Dorsolateral prefrontal cortex (tissue), 120 donors: ENCODE measurements at regions of chr6 and their contacts with region 1.

Region 1: GRCh38 chr6:21593412-21593926 is at the start of gene SOX4:
- DNase-seq: peak; percentile 67 to 95 (median 90)
- H3K4me3 ChIP-seq: peak within 1 kb of the TSS; percentile 60 to 88 (median 75)
- H3K27ac ChIP-seq: peak within 1 kb of the TSS in 58 of 59 donors; percentile 11 to 90 (median 79)
- H3K27me3 ChIP-seq: no peaks in the 10 kb centered on the region
- CTCF ChIP-seq: peak in 3 of 56 donors; percentile 13 to 21 (median 18)
- total RNA-seq, gene SOX4: 1.8 to 6.0 (median 3.8) TPM

Region 2: DNA sequence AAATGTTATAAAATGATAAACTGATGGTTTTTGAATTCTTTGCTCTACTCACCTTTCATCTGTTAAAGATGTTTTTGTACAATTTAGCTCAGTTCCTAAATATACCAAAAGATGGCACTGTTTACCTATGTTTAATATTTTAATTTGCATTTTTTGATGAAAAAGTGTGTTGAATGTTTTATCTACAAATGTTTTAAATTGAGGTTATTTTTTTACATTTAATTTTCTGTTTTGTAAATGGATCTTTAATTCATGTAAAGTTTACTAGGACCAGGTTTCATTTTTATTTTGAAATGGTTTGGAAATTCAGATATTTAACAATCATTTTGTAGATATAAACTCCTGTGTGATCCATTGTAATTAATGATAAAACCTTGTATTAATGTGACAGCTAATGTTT is 1029.2 kb before region 1 on chr6:
- intact Hi-C with region 1: loop called (anchors 2 to 5 kb)
- DNase-seq: no peak
- H3K4me3 ChIP-seq: no peak overlapping the region
- H3K27ac ChIP-seq: no peak overlapping the region
- H3K27me3 ChIP-seq: no peaks in the 10 kb centered on the region
- CTCF ChIP-seq: peak; percentile 52 to 93 (median 75)

Region 3: GRCh38 chr6:20805021-20805420 is 788.4 kb before region 1 on chr6:
- intact Hi-C with region 1: loop called in 1 of 2 experiments (anchors 10 kb)
- DNase-seq: no peak
- H3K4me3 ChIP-seq: no peak overlapping the region
- H3K27ac ChIP-seq: no peak overlapping the region
- H3K27me3 ChIP-seq: no peaks in the 10 kb centered on the region
- CTCF ChIP-seq: no peak

Region 4: DNA sequence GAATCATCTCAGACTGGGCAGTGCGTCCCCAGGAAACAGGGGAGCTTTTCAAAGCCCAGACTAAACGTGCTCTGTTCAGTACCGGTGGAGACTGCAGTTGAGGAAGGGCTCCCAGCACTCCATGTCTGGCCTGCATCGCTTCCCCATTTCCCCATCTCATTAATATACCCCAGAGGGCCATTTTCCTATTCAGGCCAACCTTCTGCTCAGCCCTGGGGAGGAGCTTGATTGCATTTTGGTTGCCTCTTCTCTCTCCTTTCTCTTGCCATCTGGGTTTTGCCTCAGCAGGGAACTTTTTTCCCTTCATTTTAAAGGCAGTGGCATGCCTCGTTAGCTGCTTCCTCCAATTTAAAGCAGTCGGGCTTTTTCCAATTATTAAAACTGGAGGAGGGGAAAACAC is 394.2 kb before region 1 on chr6:
- intact Hi-C with region 1: loop called in 1 of 2 experiments (anchors 5 kb)
- DNase-seq: no peak
- H3K4me3 ChIP-seq: no peak overlapping the region
- H3K27ac ChIP-seq: peak overlapping the region in 3 of 59 donors; percentile 10 to 43 (median 25)
- H3K27me3 ChIP-seq: no peaks in the 10 kb centered on the region
- CTCF ChIP-seq: no peak

Region 5: GRCh38 chr6:21455071-21455470 is 138.4 kb before region 1 on chr6:
- intact Hi-C with region 1: no loop called
- DNase-seq: peak in 1 of 10 donors; percentile 7
- H3K4me3 ChIP-seq: no peak overlapping the region
- H3K27ac ChIP-seq: no peak overlapping the region
- H3K27me3 ChIP-seq: peaks cover 0 to 3% (median 0%) of the 10 kb centered on the region in 45 donors
- CTCF ChIP-seq: no peak

Region 6: DNA sequence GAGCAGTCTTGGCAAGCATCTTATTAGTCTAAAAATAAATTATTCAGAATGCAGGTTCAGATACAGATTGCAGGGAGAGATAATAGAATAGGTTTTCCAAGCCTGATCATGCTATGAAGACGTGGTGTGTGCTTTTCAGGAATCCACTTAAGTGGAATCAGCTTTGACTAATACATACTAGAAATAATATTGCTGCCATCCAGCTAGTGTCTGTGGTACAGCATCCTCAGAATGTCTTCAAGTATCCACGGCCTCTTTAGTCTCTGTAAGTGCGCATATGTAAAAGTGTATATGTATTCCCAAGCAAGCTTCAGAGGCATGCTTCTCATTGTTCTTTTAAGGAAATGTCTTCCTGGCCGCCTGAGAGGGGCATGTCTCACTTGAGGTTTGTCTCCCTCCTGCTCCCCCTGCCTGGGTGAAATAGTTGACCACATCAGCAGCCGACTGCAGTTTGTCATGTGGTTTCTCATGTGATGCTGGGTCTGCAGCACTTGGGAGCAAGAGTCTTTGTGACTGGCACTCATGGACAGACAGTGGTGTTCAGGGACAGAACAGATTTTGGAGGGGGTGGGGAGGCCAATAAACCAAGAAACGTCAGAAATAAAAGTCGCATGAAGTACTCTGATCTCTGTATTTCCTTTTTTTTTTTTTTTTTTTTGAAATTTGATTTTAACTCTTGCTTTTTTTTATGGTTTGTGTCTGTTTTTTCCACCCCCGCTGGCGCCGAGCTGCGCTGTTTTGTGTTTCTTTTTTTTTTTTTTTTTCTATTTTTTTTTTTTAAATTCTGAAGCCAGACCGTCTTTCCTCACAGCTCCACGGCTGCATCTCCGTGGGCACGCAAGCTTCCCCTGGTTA is 552.6 kb after region 1 on chr6:
- intact Hi-C with region 1: loop called (anchors 2 kb)
- DNase-seq: peak; percentile 26 to 92 (median 86)
- H3K4me3 ChIP-seq: peak overlapping the region; percentile 47 to 86 (median 72)
- H3K27ac ChIP-seq: peak overlapping the region in 58 of 59 donors; percentile 7 to 93 (median 84)
- H3K27me3 ChIP-seq: no peaks in the 10 kb centered on the region
- CTCF ChIP-seq: peak; percentile 22 to 70 (median 53)

Region 7: DNA sequence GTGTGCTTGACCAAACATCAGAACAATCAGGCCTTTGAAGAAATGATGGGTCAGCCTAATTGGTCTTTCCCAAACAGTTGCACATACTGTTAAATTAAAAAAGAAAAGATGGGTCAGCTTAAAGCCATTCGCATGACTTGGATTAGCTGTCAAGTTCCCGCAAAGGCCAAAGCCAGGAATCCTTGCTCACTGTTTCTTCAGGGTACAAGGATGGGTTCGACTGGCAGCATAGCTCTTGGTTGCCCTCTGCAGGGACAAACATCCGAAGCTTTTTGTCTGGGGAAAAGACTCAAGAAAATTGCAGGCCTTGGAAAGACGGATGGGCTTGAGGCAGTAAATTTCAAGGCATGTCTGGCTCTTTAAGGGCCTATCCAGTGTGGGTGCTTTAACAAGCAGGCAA is 1143.9 kb after region 1 on chr6:
- intact Hi-C with region 1: loop called in 1 of 2 experiments (anchors 5 kb)
- DNase-seq: peak in 9 of 10 donors; percentile 7 to 72 (median 54)
- H3K4me3 ChIP-seq: no peak overlapping the region
- H3K27ac ChIP-seq: no peak overlapping the region
- H3K27me3 ChIP-seq: no peaks in the 10 kb centered on the region
- CTCF ChIP-seq: peak; percentile 37 to 88 (median 69)

Region 8: GRCh38 chr6:23446394-23447046 is 1853.1 kb after region 1 on chr6:
- intact Hi-C with region 1: loop called (anchors 10 kb)
- DNase-seq: peak in 1 of 10 donors; percentile 17
- H3K4me3 ChIP-seq: peak overlapping the region in 36 of 59 donors; percentile 2 to 53 (median 30)
- H3K27ac ChIP-seq: peak overlapping the region in 5 of 59 donors; percentile 8 to 49 (median 29)
- H3K27me3 ChIP-seq: no peaks in the 10 kb centered on the region
- CTCF ChIP-seq: peak; percentile 37 to 87 (median 72)